Activated T-helper 2 cell treated with anti-CD3 and anti-CD28 coated beads, Interferon-gamma antibody, Interleukin-2, Interleukin-4, amounts not matched to agents 10 μg/mL and 5 μg/mL and 100 μg/mL, durations not matched to agents 14 hours and 24 hours and 36 hours (primary cell): ENCODE measurements at regions of chr3 and their contacts with region 1.

Region 1: GRCh38 chr3:18444595-18445400 is 19.7 kb upstream of the SATB1 start:
- DNase-seq: peak; percentile 77
- H3K4me3 Mint-ChIP-seq: peak overlapping the region; percentile 97
- H3K27ac Mint-ChIP-seq: peak overlapping the region; percentile 97
- H3K4me1 Mint-ChIP-seq: peaks cover 31% of the 10 kb centered on the region
- H3K27me3 Mint-ChIP-seq: no peaks in the 10 kb centered on the region

Region 2: GRCh38 chr3:18351823-18352744 is 92.7 kb before region 1 on chr3:
- intact Hi-C with region 1: no loop called
- DNase-seq: no peak
- H3K4me3 Mint-ChIP-seq: no peak overlapping the region
- H3K27ac Mint-ChIP-seq: peak overlapping the region; percentile 60
- H3K4me1 Mint-ChIP-seq: peaks cover 35% of the 10 kb centered on the region
- H3K27me3 Mint-ChIP-seq: no peaks in the 10 kb centered on the region

Region 3: GRCh38 chr3:18424729-18425640 is 19.8 kb before region 1 on chr3 and contains the start of gene SATB1:
- intact Hi-C with region 1: loop called (anchors 2 kb)
- DNase-seq: peak; percentile 63
- H3K4me3 Mint-ChIP-seq: peak within 1 kb of the TSS; percentile 89
- H3K27ac Mint-ChIP-seq: peak within 1 kb of the TSS; percentile 93
- H3K4me1 Mint-ChIP-seq: peaks cover 62% of the 10 kb centered on the region
- H3K27me3 Mint-ChIP-seq: no peaks in the 10 kb centered on the region
- total RNA-seq, gene SATB1: 831 and 866 TPM in 2 replicates

Region 4: GRCh38 chr3:18649666-18650363 is 205.0 kb after region 1 on chr3:
- intact Hi-C with region 1: loop called (anchors 2 kb)
- DNase-seq: peak; percentile 49
- H3K4me3 Mint-ChIP-seq: peak overlapping the region; percentile 14
- H3K27ac Mint-ChIP-seq: peak overlapping the region; percentile 93
- H3K4me1 Mint-ChIP-seq: peaks cover 84% of the 10 kb centered on the region
- H3K27me3 Mint-ChIP-seq: no peaks in the 10 kb centered on the region

Region 5: DNA sequence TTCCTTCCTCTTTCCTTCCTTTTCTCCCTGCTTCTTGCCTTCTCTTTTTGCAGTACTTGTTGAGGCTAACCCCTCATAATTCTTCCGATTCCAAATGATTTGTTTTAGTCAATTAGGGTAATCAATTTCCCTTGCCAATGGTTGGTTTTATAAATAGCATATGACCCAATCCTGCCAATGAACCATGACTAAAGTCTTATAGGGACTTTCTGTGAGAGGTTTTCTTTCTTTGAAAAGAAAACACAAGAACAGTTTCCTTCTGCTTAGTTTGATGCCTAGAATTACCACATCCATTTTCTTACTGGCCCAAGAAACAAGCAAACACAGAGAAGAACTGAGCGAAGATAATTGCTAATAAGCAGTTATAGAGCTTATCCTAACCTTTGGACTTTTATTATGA is 272.8 kb after region 1 on chr3:
- intact Hi-C with region 1: loop called (anchors 1 kb)
- DNase-seq: no peak
- H3K4me3 Mint-ChIP-seq: peak overlapping the region; percentile 59
- H3K27ac Mint-ChIP-seq: peak overlapping the region; percentile 98
- H3K4me1 Mint-ChIP-seq: peaks cover 67% of the 10 kb centered on the region
- H3K27me3 Mint-ChIP-seq: no peaks in the 10 kb centered on the region

Region 6: GRCh38 chr3:18758047-18758704 is 313.4 kb after region 1 on chr3:
- intact Hi-C with region 1: loop called (anchors 1 kb)
- DNase-seq: peak; percentile 28
- H3K4me3 Mint-ChIP-seq: no peak overlapping the region
- H3K27ac Mint-ChIP-seq: peak overlapping the region; percentile 85
- H3K4me1 Mint-ChIP-seq: peaks cover 43% of the 10 kb centered on the region
- H3K27me3 Mint-ChIP-seq: no peaks in the 10 kb centered on the region

Region 7: GRCh38 chr3:19946832-19947548 is 1502.2 kb after region 1 on chr3 and contains the start of gene RAB5A:
- intact Hi-C with region 1: loop called (anchors 5 kb)
- DNase-seq: peak; percentile 97
- H3K4me3 Mint-ChIP-seq: peak within 1 kb of the TSS; percentile 98
- H3K27ac Mint-ChIP-seq: peak within 1 kb of the TSS; percentile 98
- H3K4me1 Mint-ChIP-seq: peaks cover 29% of the 10 kb centered on the region
- H3K27me3 Mint-ChIP-seq: peaks cover 2% of the 10 kb centered on the region
- total RNA-seq, gene RAB5A: 43.5 and 49.5 TPM in 2 replicates